Activated B cell treated with CpG ODN at 0.5 μM for 24 hours (primary cell): ENCODE measurements at regions of chr3 and their contacts with region 1.

Region 1: GRCh38 chr3:196684548-196685407 is 27.3 kb downstream of the CEP19 start:
- DNase-seq: peak; percentile 49
- ATAC-seq: peak; percentile 90
- H3K4me3 Mint-ChIP-seq: peak overlapping the region; percentile 66
- H3K27ac Mint-ChIP-seq: peak overlapping the region; percentile 60
- H3K4me1 Mint-ChIP-seq: peaks cover 30% of the 10 kb centered on the region
- H3K27me3 Mint-ChIP-seq: no peaks in the 10 kb centered on the region
- CTCF ChIP-seq: peak; percentile 81

Region 2: DNA sequence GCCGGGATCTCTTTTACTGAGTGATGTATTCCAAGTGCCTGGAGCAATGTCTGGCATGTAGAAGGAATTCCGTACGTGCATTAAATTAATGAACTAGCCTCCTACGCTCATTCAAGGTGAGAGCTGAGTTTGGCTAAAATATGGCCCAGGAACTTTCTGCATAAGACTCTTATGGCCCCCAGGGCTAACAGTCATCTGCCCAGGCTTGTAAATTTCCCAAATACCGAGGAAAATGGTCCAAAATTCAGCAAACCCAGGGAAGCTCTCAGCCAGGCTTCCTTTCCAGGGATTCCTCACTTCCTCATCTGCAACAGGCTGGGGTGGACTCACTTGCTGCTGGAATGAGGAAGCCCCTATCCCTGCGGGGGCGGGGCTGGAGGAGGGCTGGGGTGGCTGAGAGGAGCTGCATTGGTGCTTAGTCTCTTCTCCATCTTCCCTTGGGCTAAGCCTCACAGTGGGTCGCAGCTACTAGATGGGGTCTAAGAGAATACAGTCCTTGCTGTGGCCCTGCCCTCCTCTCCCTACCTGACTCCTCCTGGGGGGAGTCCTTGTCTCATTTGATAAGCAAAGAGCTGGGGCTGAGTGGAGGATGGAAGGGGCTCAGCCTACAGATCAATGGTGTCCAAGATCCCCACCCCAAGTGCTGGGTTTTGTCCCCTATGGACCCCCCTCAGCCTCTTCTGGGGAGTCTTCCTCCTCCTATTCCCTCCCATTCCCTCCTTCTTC is 1072.5 kb before region 1 on chr3:
- CTCF ChIA-PET with region 1: no interaction called
- POLR2A ChIA-PET with region 1: no interaction called
- intact Hi-C with region 1: no loop called
- DNase-seq: no peak
- ATAC-seq: no peak
- H3K4me3 Mint-ChIP-seq: no peak overlapping the region
- H3K27ac Mint-ChIP-seq: no peak overlapping the region
- H3K4me1 Mint-ChIP-seq: peaks cover 6% of the 10 kb centered on the region
- H3K27me3 Mint-ChIP-seq: peaks cover 11% of the 10 kb centered on the region
- CTCF ChIP-seq: no peak

Region 3: DNA sequence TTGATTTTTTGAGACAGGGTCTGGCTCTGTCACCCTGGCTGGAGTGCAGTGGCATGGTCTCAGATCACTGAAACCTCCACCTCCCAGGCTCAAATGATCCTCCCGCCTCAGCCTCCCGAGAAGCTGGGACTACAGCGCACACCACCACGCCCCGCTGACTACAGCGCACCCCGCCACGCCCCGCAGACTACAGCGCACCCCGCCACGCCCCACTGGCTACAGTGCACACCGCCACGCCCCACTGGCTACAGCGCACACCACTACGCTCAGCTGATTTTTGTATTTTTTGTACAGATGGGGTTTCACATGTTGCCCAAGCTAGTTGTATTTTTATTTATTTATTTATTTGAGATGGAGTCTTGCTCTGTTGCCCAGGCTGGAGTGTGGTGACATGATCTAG is 432.9 kb before region 1 on chr3:
- CTCF ChIA-PET with region 1: no interaction called
- POLR2A ChIA-PET with region 1: no interaction called
- intact Hi-C with region 1: loop called (anchors 5 kb)
- DNase-seq: no peak
- ATAC-seq: peak; percentile 70
- H3K4me3 Mint-ChIP-seq: no peak overlapping the region
- H3K27ac Mint-ChIP-seq: no peak overlapping the region
- H3K4me1 Mint-ChIP-seq: peaks cover 8% of the 10 kb centered on the region
- H3K27me3 Mint-ChIP-seq: no peaks in the 10 kb centered on the region
- CTCF ChIP-seq: no peak

Region 4: GRCh38 chr3:196528639-196529233 is 156.0 kb before region 1 on chr3:
- CTCF ChIA-PET with region 1: interaction called, 3 read pairs
- POLR2A ChIA-PET with region 1: interaction called, 3 read pairs
- intact Hi-C with region 1: loop called (anchors 5 kb)
- DNase-seq: peak; percentile 92
- ATAC-seq: peak; percentile 97
- H3K4me3 Mint-ChIP-seq: peak overlapping the region; percentile 77
- H3K27ac Mint-ChIP-seq: peak overlapping the region; percentile 68
- H3K4me1 Mint-ChIP-seq: peaks cover 9% of the 10 kb centered on the region
- H3K27me3 Mint-ChIP-seq: no peaks in the 10 kb centered on the region
- CTCF ChIP-seq: no peak

Region 5: GRCh38 chr3:196632046-196632751 is 52.6 kb before region 1 on chr3:
- CTCF ChIA-PET with region 1: interaction called, 12 read pairs
- POLR2A ChIA-PET with region 1: interaction called, 10 read pairs
- intact Hi-C with region 1: loop called (anchors 2 kb)
- DNase-seq: peak; percentile 77
- ATAC-seq: peak; percentile 75
- H3K4me3 Mint-ChIP-seq: peak overlapping the region; percentile 93
- H3K27ac Mint-ChIP-seq: peak overlapping the region; percentile 96
- H3K4me1 Mint-ChIP-seq: peaks cover 66% of the 10 kb centered on the region
- H3K27me3 Mint-ChIP-seq: no peaks in the 10 kb centered on the region
- CTCF ChIP-seq: no peak